ENCODE measurements at regions of chr21 and their contacts with region 1.

Region 1: DNA sequence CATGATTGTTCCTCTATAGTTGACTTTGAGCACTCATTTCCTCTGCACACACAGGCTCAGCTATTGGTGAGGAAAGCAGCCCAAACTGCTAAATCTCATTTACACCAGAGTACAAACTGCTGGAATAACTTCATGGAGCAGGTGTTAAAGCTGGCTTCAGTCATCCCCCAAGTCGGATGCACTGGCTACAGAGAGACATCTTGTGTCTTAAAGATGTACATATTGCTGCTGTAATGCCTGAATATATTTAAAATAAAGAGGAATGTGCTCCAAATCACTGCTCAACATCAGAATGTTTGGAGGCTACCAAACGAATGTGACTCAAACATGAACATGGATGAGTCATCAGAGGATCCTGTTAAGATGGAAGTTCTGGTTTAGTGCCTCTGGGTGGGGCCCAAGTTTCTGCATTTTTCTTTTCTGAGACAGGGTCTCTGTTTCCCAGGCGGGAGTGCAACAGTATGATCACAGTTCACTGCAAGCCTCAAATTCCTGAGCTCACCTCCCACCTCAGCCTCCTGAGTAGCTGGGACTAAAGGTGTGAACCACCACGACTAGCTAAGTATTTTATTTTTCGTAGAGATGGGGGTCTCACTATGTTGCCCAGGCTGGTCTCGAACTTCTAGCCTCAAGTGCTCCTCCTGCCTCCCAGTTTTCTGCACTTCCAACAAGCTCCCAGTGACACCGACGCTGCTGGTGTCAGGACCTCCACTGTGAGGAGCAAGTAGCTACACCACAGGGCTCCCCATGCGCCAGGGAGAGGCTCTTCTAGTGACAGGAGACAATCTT is 79.0 kb upstream of the KRTAP19-8 start:
- DNase-seq: peak; percentile 42
- H3K4me3 Mint-ChIP-seq: no peak overlapping the region
- H3K27ac Mint-ChIP-seq: peak overlapping the region; percentile 38
- H3K4me1 Mint-ChIP-seq: peaks cover 20% of the 10 kb centered on the region
- H3K27me3 Mint-ChIP-seq: no peaks in the 10 kb centered on the region

Region 2: DNA sequence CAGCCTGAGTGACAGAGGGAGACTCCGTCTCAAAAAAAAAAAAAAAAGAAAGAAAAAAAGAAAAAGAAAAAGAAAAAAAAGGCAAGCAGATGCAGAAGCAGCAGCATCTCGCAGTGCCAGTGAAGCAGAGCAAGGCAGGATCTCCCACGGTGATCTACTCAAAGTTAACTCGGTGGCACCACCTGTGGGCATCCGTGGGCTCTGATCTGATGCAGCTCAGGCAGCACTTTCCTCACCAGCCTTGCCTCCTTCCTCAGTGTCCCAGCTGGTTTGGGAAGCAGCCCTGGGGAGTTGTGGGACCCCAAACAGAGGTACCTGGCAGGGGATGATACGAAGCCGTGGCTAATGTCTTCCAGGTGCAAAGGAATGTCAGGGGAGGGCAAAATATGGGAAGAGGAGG is 25.3 kb after region 1 on chr21:
- CTCF ChIA-PET with region 1: interaction called, 4 read pairs
- intact Hi-C with region 1: loop called (anchors 1 kb)
- DNase-seq: peak; percentile 68
- H3K4me3 Mint-ChIP-seq: no peak overlapping the region
- H3K27ac Mint-ChIP-seq: no peak overlapping the region
- H3K4me1 Mint-ChIP-seq: peaks cover 32% of the 10 kb centered on the region
- H3K27me3 Mint-ChIP-seq: no peaks in the 10 kb centered on the region

Region 3: DNA sequence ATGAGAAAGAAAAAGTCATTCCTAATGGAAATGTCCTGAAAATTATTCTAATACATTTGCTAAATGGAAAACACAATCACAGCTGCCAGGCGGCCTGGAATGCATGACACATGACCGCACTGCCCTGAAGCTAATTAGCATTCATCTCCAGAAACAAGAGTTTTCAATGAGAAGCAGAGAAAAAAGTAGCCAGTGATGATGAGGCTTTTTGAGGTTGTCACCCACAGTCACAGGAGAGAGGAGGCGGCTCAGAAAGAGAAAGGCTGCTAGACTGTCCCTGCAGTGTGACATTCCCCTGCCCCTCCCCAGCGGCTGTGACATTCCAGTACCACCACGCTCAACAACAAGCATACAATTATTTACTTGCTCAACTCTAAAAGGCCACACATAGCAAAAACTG is 43.8 kb after region 1 on chr21:
- CTCF ChIA-PET with region 1: interaction called, 13 read pairs
- intact Hi-C with region 1: loop called (anchors 1 kb)
- DNase-seq: peak; percentile 60
- H3K4me3 Mint-ChIP-seq: no peak overlapping the region
- H3K27ac Mint-ChIP-seq: peak overlapping the region; percentile 89
- H3K4me1 Mint-ChIP-seq: peaks cover 88% of the 10 kb centered on the region
- H3K27me3 Mint-ChIP-seq: no peaks in the 10 kb centered on the region

Measured in activated naive CD4-positive, alpha-beta T cell treated with anti-CD3 and anti-CD28 coated beads for 36 hours (primary cell).